ENCODE measurements at regions of chr20 and their contacts with region 1.

Region 1: DNA sequence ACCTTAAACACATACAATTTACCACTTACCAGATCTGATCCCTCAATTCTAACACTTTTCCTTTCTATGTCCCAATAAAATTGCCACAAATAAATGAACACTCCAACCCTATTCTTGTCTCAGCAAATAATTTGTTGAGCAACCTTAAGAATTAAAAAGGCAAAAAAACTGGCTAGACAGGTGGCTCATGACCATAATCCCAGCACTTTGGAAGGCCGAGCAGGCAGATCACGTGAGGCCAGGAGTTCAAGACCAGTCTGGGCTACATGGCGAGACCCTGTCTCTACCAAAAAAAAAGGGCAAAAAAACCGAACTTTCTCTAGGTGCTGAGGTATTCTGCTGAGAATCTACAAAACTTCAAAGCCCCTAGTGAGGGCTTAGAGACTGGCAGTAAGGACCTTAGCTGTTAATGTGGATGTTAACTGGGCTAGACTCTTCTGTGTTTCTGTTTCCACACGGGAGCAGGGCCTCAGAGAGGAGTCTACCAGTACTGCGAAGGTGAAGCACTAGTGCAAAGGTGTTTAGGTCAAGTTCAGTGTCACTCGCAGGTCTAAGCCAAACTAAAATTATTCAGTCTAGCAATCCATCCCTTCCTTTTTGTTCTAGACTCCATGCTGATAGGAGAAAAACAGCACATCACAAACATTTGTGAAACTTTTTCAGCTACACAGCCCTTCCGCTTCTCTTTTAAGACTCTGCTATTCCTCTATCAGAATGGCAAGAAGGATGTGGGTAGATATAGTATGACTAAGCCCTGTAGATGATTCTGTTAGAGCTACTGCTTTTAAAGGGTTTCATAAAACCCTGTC is 2.6 kb downstream of the FASTKD5 start:
- DNase-seq: no peak
- H3K4me3 ChIP-seq: peak overlapping the region in 1 of 4 donors; percentile 95
- H3K27ac ChIP-seq: peak overlapping the region in 1 of 4 donors; percentile 11
- H3K4me1 ChIP-seq: peaks cover 42 to 71% (median 65%) of the 10 kb centered on the region in 4 donors
- H3K27me3 ChIP-seq: no peaks in the 10 kb centered on the region
- CTCF ChIP-seq: no peak
- EP300 ChIP-seq: no peak
- POLR2A ChIP-seq: no peak

Region 2: GRCh38 chr20:2914160-2914559 is 242.9 kb before region 1 on chr20:
- intact Hi-C with region 1: no loop called
- DNase-seq: no peak
- H3K4me3 ChIP-seq: no peak overlapping the region
- H3K27ac ChIP-seq: no peak overlapping the region
- H3K4me1 ChIP-seq: peaks cover 0 to 4% (median 0%) of the 10 kb centered on the region in 4 donors
- H3K27me3 ChIP-seq: no peaks in the 10 kb centered on the region
- CTCF ChIP-seq: no peak
- EP300 ChIP-seq: no peak
- POLR2A ChIP-seq: no peak

Region 3: GRCh38 chr20:2984956-2985661 is 171.9 kb before region 1 on chr20:
- intact Hi-C with region 1: no loop called
- DNase-seq: peak; percentile 39
- H3K4me3 ChIP-seq: no peak overlapping the region
- H3K27ac ChIP-seq: no peak overlapping the region
- H3K4me1 ChIP-seq: peaks cover 9 to 22% (median 9%) of the 10 kb centered on the region in 4 donors
- H3K27me3 ChIP-seq: no peaks in the 10 kb centered on the region
- CTCF ChIP-seq: no peak
- EP300 ChIP-seq: no peak
- POLR2A ChIP-seq: no peak

Region 4: DNA sequence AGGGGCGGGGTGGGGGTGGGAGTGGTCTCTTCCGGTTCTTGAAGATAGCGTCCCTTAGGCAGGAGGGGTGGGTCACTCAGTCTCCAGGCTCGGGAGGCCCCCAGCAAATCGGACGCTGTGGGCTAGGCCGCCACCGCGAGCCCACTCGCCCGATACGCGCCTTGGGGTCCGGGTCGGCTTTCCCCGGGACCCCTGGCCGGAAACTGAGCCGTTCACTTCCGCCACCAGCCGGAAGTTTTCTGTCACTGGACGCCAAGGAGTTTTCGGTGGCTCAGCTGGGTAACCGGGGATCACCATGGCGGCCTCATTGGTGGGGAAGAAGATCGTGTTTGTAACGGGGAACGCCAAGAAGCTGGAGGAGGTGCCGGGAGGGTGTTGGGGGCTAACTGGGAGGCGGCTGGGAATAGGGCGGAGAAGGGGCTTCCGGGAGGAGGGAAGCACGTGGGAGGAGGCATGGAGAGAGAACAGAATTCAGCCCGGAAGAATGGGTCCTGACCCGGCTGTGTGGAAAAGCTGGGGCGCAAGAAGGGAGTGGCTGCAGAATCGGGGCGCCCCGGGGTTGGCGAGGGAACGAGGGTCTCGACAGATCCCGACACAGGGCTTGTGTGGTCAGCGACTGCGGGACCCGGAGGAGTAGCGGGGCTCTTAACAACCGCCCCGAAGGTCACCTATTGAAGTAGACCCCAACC is 52.4 kb after region 1 on chr20 and contains the start of gene ITPA:
- intact Hi-C with region 1: loop called (anchors 5 kb)
- DNase-seq: no peak
- H3K4me3 ChIP-seq: peak within 1 kb of the TSS; percentile 73 to 87 (median 84)
- H3K27ac ChIP-seq: peak within 1 kb of the TSS; percentile 71 to 81 (median 77)
- H3K4me1 ChIP-seq: peaks cover 16 to 27% (median 25%) of the 10 kb centered on the region in 4 donors
- H3K27me3 ChIP-seq: no peaks in the 10 kb centered on the region
- CTCF ChIP-seq: no peak
- EP300 ChIP-seq: no peak
- POLR2A ChIP-seq: no peak
- total RNA-seq, gene ITPA: 18.7 to 30.0 (median 27.8) TPM

Measured in esophagus muscularis mucosa (tissue), 4 donors.